Tibial artery (tissue), 4 donors: ENCODE measurements at regions of chr2 and their contacts with region 1.

Region 1: GRCh38 chr2:10812362-10813162 is at the start of gene PDIA6:
- DNase-seq: peak; percentile 97 to 99
- H3K4me3 ChIP-seq: peak within 1 kb of the TSS; percentile 84 to 97
- H3K27ac ChIP-seq: peak within 1 kb of the TSS; percentile 87 to 93
- H3K4me1 ChIP-seq: peaks cover 0 to 42% (median 18%) of the 10 kb centered on the region in 4 donors
- H3K27me3 ChIP-seq: no peaks in the 10 kb centered on the region
- CTCF ChIP-seq: peak; percentile 17 to 57

Region 2: DNA sequence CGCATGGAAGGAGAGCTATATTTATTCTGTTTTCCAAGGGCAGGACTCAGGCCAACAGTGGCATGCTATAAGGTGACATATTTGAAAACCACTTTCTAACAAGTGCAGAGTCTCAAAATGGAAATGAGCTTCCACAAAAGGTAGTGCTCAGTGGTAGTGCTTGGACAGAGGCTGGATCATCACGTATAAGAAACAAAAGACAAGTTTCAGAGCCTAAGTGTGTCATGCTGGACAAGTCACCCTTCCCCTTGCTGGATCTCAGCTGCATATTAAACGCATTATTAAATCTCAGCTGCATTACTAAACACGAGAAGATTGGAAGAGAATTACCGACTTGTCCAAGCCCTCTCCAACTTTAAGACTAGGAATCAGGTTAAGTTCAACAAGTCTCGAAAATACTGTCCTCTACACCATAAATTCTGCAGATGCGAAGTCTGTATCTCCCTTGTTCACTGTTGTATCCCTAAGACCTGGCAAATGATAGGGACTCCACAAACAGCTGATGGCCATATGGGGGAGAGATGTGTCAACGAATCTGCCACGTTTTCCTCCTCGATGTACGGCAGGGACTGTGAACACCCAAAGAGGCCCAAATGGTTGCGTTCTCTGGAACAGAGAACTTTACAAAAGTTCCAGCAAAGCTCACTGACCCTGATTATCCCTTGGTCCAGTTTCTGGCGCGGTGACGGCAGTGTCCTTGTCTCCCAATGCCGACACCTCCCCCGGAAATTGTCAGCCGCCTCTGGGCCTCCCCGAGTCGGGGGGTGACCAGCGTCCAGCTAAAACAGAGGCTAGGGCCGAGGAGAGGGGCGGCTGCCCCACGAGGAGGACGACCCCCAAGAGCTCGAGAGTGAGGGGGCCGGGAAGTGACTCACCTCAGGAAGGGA is 123.4 kb before region 1 on chr2:
- intact Hi-C with region 1: loop called (anchors 10 kb)
- DNase-seq: peak; percentile 38 to 67
- H3K4me3 ChIP-seq: peak overlapping the region; percentile 76 to 83
- H3K27ac ChIP-seq: peak overlapping the region; percentile 82 to 84
- H3K4me1 ChIP-seq: peaks cover 0 to 26% (median 14%) of the 10 kb centered on the region in 4 donors
- H3K27me3 ChIP-seq: no peaks in the 10 kb centered on the region
- CTCF ChIP-seq: no peak

Region 3: GRCh38 chr2:10762651-10763465 is 49.7 kb before region 1 on chr2:
- intact Hi-C with region 1: no loop called
- DNase-seq: no peak
- H3K4me3 ChIP-seq: no peak overlapping the region
- H3K27ac ChIP-seq: no peak overlapping the region
- H3K4me1 ChIP-seq: no peaks in the 10 kb centered on the region
- H3K27me3 ChIP-seq: peaks cover 0 to 16% of the 10 kb centered on the region in 2 donors
- CTCF ChIP-seq: no peak